ENCODE measurements at regions of chr7 and their contacts with region 1.

Region 1: GRCh38 chr7:148142660-148143248 is 447.8 kb upstream of the C7orf33 start:
- DNase-seq: peak; percentile 9
- H3K4me3 ChIP-seq: no peak overlapping the region
- H3K27ac ChIP-seq: no peak overlapping the region
- H3K4me1 ChIP-seq: no peaks in the 10 kb centered on the region
- H3K27me3 ChIP-seq: no peaks in the 10 kb centered on the region
- CTCF ChIP-seq: peak; percentile 31 to 62

Region 2: DNA sequence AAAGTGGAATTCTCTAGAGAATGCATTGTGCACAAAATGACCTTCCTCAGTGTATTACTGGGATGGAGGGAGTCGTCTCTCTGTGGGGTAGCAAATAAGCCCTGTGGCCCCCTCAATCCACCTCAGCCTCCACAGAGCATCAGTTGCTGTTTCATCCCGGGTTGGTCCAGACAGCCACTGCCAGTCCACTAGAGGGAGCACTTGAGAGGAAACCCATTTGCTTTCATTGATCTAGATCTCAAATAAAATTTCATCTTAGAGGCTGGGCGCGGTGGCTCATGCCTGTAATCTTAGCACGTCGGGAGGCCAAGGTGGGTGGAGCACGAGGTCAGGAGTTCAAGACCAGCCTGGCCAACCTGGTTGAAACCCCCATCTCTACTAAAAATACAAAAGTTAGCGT is 897.5 kb before region 1 on chr7:
- CTCF ChIA-PET with region 1: no interaction called
- dilution Hi-C with region 1: no loop called
- in situ Hi-C with region 1: no loop called
- intact Hi-C with region 1: loop called (anchors 10 kb)
- DNase-seq: peak; percentile 14
- H3K4me3 ChIP-seq: no peak overlapping the region
- H3K27ac ChIP-seq: no peak overlapping the region
- H3K4me1 ChIP-seq: no peaks in the 10 kb centered on the region
- H3K27me3 ChIP-seq: no peaks in the 10 kb centered on the region
- CTCF ChIP-seq: peak; percentile 46 to 73